Activated naive CD4-positive, alpha-beta T cell treated with anti-CD3 and anti-CD28 coated beads for 36 hours (primary cell): ENCODE measurements at regions of chr5 and their contacts with region 1.

Region 1: GRCh38 chr5:81751009-81751835 is at the start of gene SSBP2:
- DNase-seq: peak; percentile 98
- H3K4me3 Mint-ChIP-seq: peak within 1 kb of the TSS; percentile 92
- H3K27ac Mint-ChIP-seq: peak within 1 kb of the TSS; percentile 80
- H3K4me1 Mint-ChIP-seq: peaks cover 27% of the 10 kb centered on the region
- H3K27me3 Mint-ChIP-seq: no peaks in the 10 kb centered on the region
- total RNA-seq, gene SSBP2: 14.5 to 14.7 TPM

Region 2: DNA sequence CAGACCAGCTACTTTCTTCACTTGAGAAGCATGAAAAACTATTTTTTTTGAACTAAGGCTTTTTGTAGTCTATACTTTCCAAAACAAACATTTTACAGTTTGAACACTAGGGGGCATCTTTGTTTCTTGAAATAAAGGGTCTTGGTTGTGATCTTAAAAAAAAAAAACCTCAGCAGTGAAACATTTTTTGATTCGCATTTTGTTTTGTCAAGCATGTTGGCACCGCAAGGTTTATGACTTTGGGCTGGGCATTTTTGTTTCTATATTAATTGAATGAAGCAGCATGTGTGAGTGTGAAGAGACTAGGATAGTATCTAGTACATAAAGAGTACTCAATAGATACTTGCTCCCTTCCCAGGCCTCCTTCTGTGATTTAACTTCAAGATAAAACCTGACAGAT is 325.7 kb before region 1 on chr5:
- CTCF ChIA-PET with region 1: no interaction called
- intact Hi-C with region 1: loop called (anchors 1 kb)
- DNase-seq: peak; percentile 7
- H3K4me3 Mint-ChIP-seq: no peak overlapping the region
- H3K27ac Mint-ChIP-seq: peak overlapping the region; percentile 8
- H3K4me1 Mint-ChIP-seq: peaks cover 16% of the 10 kb centered on the region
- H3K27me3 Mint-ChIP-seq: no peaks in the 10 kb centered on the region

Region 3: GRCh38 chr5:81533629-81534405 is 217.4 kb before region 1 on chr5:
- CTCF ChIA-PET with region 1: no interaction called
- intact Hi-C with region 1: loop called (anchors 1 kb)
- DNase-seq: no peak
- H3K4me3 Mint-ChIP-seq: no peak overlapping the region
- H3K27ac Mint-ChIP-seq: no peak overlapping the region
- H3K4me1 Mint-ChIP-seq: peaks cover 46% of the 10 kb centered on the region
- H3K27me3 Mint-ChIP-seq: no peaks in the 10 kb centered on the region

Region 4: GRCh38 chr5:81779125-81779915 is 28.1 kb after region 1 on chr5:
- CTCF ChIA-PET with region 1: interaction called, 3 read pairs
- intact Hi-C with region 1: loop called (anchors 1 kb)
- DNase-seq: peak; percentile 51
- H3K4me3 Mint-ChIP-seq: peak overlapping the region; percentile 73
- H3K27ac Mint-ChIP-seq: peak overlapping the region; percentile 83
- H3K4me1 Mint-ChIP-seq: peaks cover 16% of the 10 kb centered on the region
- H3K27me3 Mint-ChIP-seq: no peaks in the 10 kb centered on the region

Region 5: DNA sequence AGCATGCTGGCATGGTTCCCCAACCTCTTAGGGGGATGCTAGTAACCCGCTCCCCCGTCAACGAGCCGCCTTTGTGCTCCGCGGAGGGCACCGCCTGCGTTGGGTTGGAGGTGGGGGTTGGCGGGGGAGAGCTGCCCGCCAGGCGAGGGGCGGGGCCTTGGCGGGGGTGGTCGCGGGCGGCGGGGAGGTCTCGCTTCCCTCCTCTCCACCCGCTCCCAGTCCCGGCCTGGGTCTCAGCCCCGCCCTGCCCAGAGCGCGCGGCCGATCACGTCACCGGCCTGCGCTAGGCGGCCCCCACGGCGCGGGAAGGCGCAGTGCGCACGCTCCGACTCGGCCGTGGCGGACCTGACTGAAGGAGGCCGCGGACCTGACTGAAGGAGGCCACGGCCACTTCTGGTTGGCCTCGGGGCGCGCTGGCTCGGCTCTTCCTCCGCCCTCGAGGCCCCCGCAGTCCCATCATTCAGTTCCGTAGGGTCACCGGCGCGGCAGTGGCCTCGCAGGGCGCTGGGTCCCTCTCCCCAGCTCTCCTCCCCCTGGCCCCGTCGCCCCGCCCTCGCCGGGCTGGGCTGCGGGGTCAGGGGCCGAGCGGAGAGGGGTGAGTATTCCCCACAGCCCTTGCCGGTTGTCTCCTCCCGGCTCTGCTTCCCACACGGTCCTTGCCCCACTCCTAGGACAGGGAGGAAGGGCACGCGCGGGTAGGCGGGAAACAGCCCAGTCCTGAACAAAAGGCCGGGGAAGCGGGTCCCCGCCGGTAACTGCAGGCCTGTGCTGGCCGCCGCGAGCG is 220.7 kb after region 1 on chr5 and contains the start of gene ATG10:
- CTCF ChIA-PET with region 1: no interaction called
- intact Hi-C with region 1: loop called (anchors 1 kb)
- DNase-seq: peak; percentile 86
- H3K4me3 Mint-ChIP-seq: peak within 1 kb of the TSS; percentile 94
- H3K27ac Mint-ChIP-seq: peak within 1 kb of the TSS; percentile 98
- H3K4me1 Mint-ChIP-seq: peaks cover 22% of the 10 kb centered on the region
- H3K27me3 Mint-ChIP-seq: no peaks in the 10 kb centered on the region
- total RNA-seq, gene ATG10: 7.2 to 8.0 TPM

Region 6: GRCh38 chr5:82225525-82226172 is 474.4 kb after region 1 on chr5:
- CTCF ChIA-PET with region 1: no interaction called
- intact Hi-C with region 1: loop called (anchors 2 kb)
- DNase-seq: peak; percentile 79
- H3K4me3 Mint-ChIP-seq: no peak overlapping the region
- H3K27ac Mint-ChIP-seq: no peak overlapping the region
- H3K4me1 Mint-ChIP-seq: peaks cover 3% of the 10 kb centered on the region
- H3K27me3 Mint-ChIP-seq: no peaks in the 10 kb centered on the region

Region 7: GRCh38 chr5:83076742-83077661 is 1325.8 kb after region 1 on chr5 and contains the starts of genes TMEM167A and XRCC4:
- CTCF ChIA-PET with region 1: no interaction called
- intact Hi-C with region 1: loop called (anchors 10 kb)
- DNase-seq: peak; percentile 95
- H3K4me3 Mint-ChIP-seq: peak within 1 kb of the TSS; percentile 98
- H3K27ac Mint-ChIP-seq: peak within 1 kb of the TSS; percentile 96
- H3K4me1 Mint-ChIP-seq: peaks cover 48% of the 10 kb centered on the region
- H3K27me3 Mint-ChIP-seq: no peaks in the 10 kb centered on the region
- total RNA-seq, gene TMEM167A: 58.8 to 64.4 TPM
- total RNA-seq, gene XRCC4: 12.1 to 12.8 TPM